OCI-LY7 (cell line): ENCODE measurements at regions of chr22 and their contacts with region 1.

Region 1: DNA sequence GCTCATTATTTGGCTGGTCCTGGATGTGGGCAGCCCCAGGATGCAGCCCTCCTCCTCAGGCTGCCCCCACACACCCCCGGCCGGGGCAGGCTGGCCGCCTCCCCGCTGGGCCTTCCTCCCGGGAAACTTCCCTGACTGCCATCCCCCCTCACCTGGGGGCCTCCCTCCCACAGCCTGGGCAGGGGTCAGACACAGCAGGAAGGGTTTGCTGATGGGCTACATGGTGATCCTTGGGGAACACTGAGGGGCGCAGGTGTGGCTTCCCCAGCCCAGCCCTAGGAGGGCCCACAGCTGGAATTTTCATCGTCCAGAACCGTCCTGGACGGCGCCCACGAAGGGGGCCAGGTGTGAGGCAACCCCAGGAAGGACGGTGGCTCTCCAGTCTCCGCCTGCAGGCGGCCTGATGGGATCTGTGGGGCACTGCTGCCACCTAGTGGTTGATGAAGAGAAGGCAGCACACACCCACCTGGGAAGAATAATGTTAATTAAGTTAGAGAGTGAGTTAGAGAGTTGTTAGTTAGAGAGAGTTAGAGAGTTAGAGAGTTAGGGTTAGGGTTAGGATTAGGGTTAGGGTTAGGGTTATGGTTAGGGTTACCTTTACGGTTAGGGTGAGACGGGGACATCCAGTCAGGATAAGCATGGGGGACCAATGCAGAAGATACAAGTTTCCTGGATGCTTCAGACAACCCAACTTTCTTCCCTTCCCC is 75.9 kb upstream of the PRR5 start:
- DNase-seq: peak; percentile 68
- H3K4me3 ChIP-seq: no peak overlapping the region
- H3K27ac ChIP-seq: no peak overlapping the region
- H3K4me1 ChIP-seq: no peaks in the 10 kb centered on the region
- CTCF ChIP-seq: peak; percentile 97

Region 2: GRCh38 chr22:43884600-43885325 is 741.4 kb before region 1 on chr22:
- CTCF ChIA-PET with region 1: no interaction called
- POLR2A ChIA-PET with region 1: no interaction called
- intact Hi-C with region 1: loop called (anchors 10 kb)
- DNase-seq: peak; percentile 56
- H3K4me3 ChIP-seq: no peak overlapping the region
- H3K27ac ChIP-seq: no peak overlapping the region
- H3K4me1 ChIP-seq: peaks cover 8% of the 10 kb centered on the region
- CTCF ChIP-seq: peak; percentile 85

Region 3: DNA sequence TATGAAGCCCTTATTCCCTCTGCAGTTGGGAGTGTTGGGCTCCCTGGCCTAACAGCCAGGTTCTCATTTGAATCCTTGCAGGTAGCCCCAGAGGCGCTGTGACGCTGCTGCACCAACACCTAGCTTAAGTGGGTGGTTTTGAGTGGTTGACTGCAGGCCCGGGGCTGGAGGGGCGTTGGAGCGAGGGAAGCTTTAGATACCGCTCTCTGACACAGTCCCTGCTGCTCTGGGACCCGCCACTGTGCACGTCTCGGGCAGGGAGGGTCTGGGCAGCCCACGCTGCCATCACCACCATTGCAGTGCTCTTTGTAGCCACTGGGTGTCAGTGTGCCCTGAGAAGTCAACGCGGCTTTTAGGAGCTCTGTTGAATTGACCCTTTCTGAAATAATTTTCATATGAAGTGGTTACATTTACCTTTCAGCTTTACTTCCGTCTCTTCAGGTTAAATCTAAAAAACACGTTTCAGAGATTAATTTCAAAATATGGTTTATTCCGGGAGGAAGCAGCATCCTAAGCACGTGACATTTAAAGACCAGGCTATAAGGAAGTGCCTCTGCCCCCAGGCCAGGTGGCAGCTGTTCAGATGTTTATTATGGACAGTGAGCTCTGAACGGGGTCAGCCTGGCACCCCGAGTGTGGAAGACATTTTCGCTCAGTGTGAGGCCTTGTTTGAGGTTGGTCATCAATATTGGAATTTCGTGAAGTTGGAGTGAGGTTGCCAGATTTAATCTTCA is 632.9 kb before region 1 on chr22:
- CTCF ChIA-PET with region 1: no interaction called
- POLR2A ChIA-PET with region 1: no interaction called
- intact Hi-C with region 1: loop called (anchors 1 kb)
- DNase-seq: peak; percentile 69
- H3K4me3 ChIP-seq: no peak overlapping the region
- H3K27ac ChIP-seq: no peak overlapping the region
- H3K4me1 ChIP-seq: peaks cover 10% of the 10 kb centered on the region
- CTCF ChIP-seq: peak; percentile 98

Region 4: GRCh38 chr22:44080936-44081861 is 544.9 kb before region 1 on chr22:
- CTCF ChIA-PET with region 1: no interaction called
- POLR2A ChIA-PET with region 1: no interaction called
- intact Hi-C with region 1: loop called (anchors 1 kb)
- DNase-seq: peak; percentile 72
- H3K4me3 ChIP-seq: no peak overlapping the region
- H3K27ac ChIP-seq: no peak overlapping the region
- H3K4me1 ChIP-seq: no peaks in the 10 kb centered on the region
- CTCF ChIP-seq: peak; percentile 89

Region 5: GRCh38 chr22:44702479-44703198 is 76.5 kb after region 1 on chr22:
- CTCF ChIA-PET with region 1: no interaction called
- POLR2A ChIA-PET with region 1: no interaction called
- intact Hi-C with region 1: no loop called
- DNase-seq: no peak
- H3K4me3 ChIP-seq: peak overlapping the region; percentile 62
- H3K27ac ChIP-seq: no peak overlapping the region
- H3K4me1 ChIP-seq: peaks cover 4% of the 10 kb centered on the region
- CTCF ChIP-seq: no peak